Activated CD8-positive, alpha-beta T cell treated with anti-CD3 and anti-CD28 coated beads for 36 hours (primary cell): ENCODE measurements at regions of chr7 and their contacts with region 1.

Region 1: GRCh38 chr7:147721962-147722830 is 868.4 kb upstream of the C7orf33 start:
- DNase-seq: no peak
- ATAC-seq: no peak
- H3K4me3 Mint-ChIP-seq: no peak overlapping the region
- H3K27ac Mint-ChIP-seq: no peak overlapping the region
- H3K4me1 Mint-ChIP-seq: no peaks in the 10 kb centered on the region
- H3K27me3 Mint-ChIP-seq: no peaks in the 10 kb centered on the region
- CTCF ChIP-seq: no peak

Region 2: GRCh38 chr7:147535701-147536111 is 186.5 kb before region 1 on chr7:
- CTCF ChIA-PET with region 1: no interaction called
- POLR2A ChIA-PET with region 1: no interaction called
- intact Hi-C with region 1: no loop called
- DNase-seq: no peak
- ATAC-seq: no peak
- H3K4me3 Mint-ChIP-seq: no peak overlapping the region
- H3K27ac Mint-ChIP-seq: no peak overlapping the region
- H3K4me1 Mint-ChIP-seq: no peaks in the 10 kb centered on the region
- H3K27me3 Mint-ChIP-seq: no peaks in the 10 kb centered on the region
- CTCF ChIP-seq: no peak

Region 3: DNA sequence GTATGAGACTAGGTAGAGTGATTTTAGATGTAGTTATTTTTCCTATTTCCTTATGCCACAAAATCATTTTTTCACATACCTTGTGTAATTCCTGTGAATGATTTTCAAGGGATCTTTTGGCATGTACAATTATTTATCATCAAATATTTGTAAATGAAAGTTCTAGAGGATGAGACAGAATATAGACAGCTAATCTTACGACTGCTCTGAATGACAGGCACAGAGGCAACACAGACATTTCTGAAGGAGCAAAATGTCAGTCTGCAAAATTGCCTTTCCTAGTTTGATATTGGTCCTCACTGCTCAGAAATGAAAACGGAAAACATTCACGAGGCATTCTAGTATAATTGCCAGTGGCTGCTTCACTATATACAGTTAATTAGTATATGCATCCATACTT is 57.8 kb after region 1 on chr7:
- CTCF ChIA-PET with region 1: no interaction called
- POLR2A ChIA-PET with region 1: no interaction called
- intact Hi-C with region 1: loop called (anchors 10 kb)
- DNase-seq: no peak
- ATAC-seq: no peak
- H3K4me3 Mint-ChIP-seq: no peak overlapping the region
- H3K27ac Mint-ChIP-seq: no peak overlapping the region
- H3K4me1 Mint-ChIP-seq: no peaks in the 10 kb centered on the region
- H3K27me3 Mint-ChIP-seq: no peaks in the 10 kb centered on the region
- CTCF ChIP-seq: no peak

Region 4: GRCh38 chr7:148095066-148095465 is 372.9 kb after region 1 on chr7:
- CTCF ChIA-PET with region 1: no interaction called
- POLR2A ChIA-PET with region 1: no interaction called
- intact Hi-C with region 1: no loop called
- DNase-seq: no peak
- ATAC-seq: no peak
- H3K4me3 Mint-ChIP-seq: no peak overlapping the region
- H3K27ac Mint-ChIP-seq: no peak overlapping the region
- H3K4me1 Mint-ChIP-seq: no peaks in the 10 kb centered on the region
- H3K27me3 Mint-ChIP-seq: peaks cover under 1% of the 10 kb centered on the region
- CTCF ChIP-seq: no peak